Ovary (tissue), 10 donors: ENCODE measurements at regions of chr15 and their contacts with region 1.

Region 1: GRCh38 chr15:96230465-96231181 is 99.9 kb upstream of the NR2F2 start:
- DNase-seq: no peak
- H3K4me3 ChIP-seq: no peak overlapping the region
- H3K27ac ChIP-seq: no peak overlapping the region
- H3K4me1 ChIP-seq: no peaks in the 10 kb centered on the region
- H3K27me3 ChIP-seq: no peaks in the 10 kb centered on the region
- CTCF ChIP-seq: no peak
- EP300 ChIP-seq: no peak
- POLR2A ChIP-seq: no peak

Region 2: GRCh38 chr15:96153929-96154328 is 76.7 kb before region 1 on chr15:
- intact Hi-C with region 1: loop called in 1 of 4 experiments (anchors 2 kb)
- DNase-seq: no peak
- H3K4me3 ChIP-seq: no peak overlapping the region
- H3K27ac ChIP-seq: no peak overlapping the region
- H3K4me1 ChIP-seq: peaks cover 7% of the 10 kb centered on the region
- H3K27me3 ChIP-seq: no peaks in the 10 kb centered on the region
- CTCF ChIP-seq: no peak
- EP300 ChIP-seq: no peak
- POLR2A ChIP-seq: no peak

Region 3: GRCh38 chr15:96181873-96182301 is 48.7 kb before region 1 on chr15:
- intact Hi-C with region 1: no loop called
- DNase-seq: peak; percentile 77 to 85 (median 81)
- H3K4me3 ChIP-seq: no peak overlapping the region
- H3K27ac ChIP-seq: peak overlapping the region; percentile 53 to 59
- H3K4me1 ChIP-seq: peaks cover 15% of the 10 kb centered on the region
- H3K27me3 ChIP-seq: no peaks in the 10 kb centered on the region
- CTCF ChIP-seq: no peak
- EP300 ChIP-seq: no peak
- POLR2A ChIP-seq: no peak

Region 4: GRCh38 chr15:96428742-96429141 is 198.1 kb after region 1 on chr15:
- intact Hi-C with region 1: no loop called
- DNase-seq: no peak
- H3K4me3 ChIP-seq: no peak overlapping the region
- H3K27ac ChIP-seq: no peak overlapping the region
- H3K4me1 ChIP-seq: no peaks in the 10 kb centered on the region
- H3K27me3 ChIP-seq: no peaks in the 10 kb centered on the region
- CTCF ChIP-seq: no peak
- EP300 ChIP-seq: no peak
- POLR2A ChIP-seq: no peak